ENCODE measurements at regions of chr6 and their contacts with region 1.

Region 1: DNA sequence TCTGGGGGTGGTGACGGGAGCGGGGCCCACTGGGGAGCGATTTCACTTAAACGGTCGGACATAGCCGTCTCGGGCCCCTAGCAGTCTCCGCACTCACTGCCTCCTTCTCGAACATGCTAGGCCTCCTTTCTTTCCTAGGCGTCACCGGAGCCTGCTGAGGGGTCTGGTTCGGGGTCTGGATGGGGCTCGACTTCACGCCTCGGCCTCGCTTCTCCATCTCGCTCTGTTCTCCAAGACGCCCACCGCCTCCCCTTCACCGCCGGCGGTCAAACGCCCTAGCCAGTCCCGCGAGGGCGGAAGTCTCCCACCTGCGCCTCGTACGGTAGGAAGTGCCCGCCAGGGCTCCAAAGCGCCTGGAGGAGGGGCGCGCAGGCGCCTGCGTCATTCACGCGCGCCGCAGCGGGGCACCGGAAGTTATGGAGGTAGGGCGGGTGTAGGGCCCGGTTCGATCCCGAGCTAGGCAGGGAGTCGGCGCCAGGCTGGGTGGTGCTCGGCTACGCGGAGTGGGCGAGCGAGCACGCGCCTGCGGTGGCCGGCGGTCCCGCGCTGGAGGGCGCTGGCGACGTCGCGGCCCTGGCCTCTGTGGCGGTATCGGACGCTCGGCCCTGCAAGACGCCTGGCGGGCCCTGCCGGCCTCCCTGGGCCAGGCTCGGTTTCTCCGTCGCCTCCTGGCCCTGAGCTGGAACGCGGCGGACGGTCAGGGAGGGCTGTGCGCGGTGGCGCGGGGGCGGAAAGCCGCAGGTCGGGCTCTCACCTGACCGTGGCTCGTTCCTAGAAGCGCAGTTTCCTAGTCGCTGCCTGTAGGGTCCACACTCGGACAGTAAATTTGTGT is at the starts of genes DYNLT2 and ERMARD:
- DNase-seq: peak; percentile 97
- H3K4me3 ChIP-seq: peak within 1 kb of the TSS; percentile 66
- H3K27ac ChIP-seq: peak within 1 kb of the TSS; percentile 97
- H3K4me1 ChIP-seq: peaks cover 17% of the 10 kb centered on the region
- H3K27me3 ChIP-seq: no peaks in the 10 kb centered on the region
- CTCF ChIP-seq: 0 out of 2 replicates have a peak, but pooled peaks have one; percentile 4
- total RNA-seq, gene DYNLT2: 2.4 TPM in 2 replicates
- total RNA-seq, gene ERMARD: 19.6 and 23.2 TPM in 2 replicates

Region 2: GRCh38 chr6:168683621-168684020 is 1067.8 kb before region 1 on chr6:
- CTCF ChIA-PET with region 1: no interaction called
- POLR2A ChIA-PET with region 1: no interaction called
- intact Hi-C with region 1: no loop called
- DNase-seq: no peak
- H3K4me3 ChIP-seq: no peak overlapping the region
- H3K27ac ChIP-seq: no peak overlapping the region
- H3K4me1 ChIP-seq: no peaks in the 10 kb centered on the region
- H3K27me3 ChIP-seq: peaks cover 5% of the 10 kb centered on the region
- CTCF ChIP-seq: no peak

Region 3: DNA sequence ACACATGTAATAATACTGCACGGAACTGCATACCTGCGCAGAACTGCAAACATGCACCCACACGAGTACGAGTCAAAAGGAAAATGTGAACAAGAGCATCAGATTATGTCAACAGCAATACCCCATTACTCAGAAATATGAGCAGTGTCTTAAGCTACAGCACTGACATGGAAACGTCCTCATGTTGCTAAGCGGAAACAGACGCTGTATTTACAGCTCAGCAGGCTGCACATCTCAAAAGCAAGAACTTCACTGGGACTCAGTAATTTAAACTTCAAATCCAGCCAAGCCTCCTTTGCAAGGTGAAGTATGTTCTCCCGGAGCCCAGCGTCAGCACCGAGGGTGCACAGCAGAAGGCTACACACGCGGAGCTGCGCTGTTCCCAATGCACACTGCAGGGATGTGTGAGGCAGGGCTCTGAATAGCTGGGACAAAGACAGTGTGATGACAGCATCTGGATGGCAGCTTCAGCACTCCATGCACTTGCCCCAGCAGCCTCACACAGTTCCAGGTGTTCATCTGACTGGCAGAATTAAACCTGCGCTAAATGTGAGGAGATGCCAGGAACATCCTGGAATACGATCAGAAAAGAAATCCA is 252.4 kb before region 1 on chr6:
- CTCF ChIA-PET with region 1: no interaction called
- POLR2A ChIA-PET with region 1: no interaction called
- intact Hi-C with region 1: no loop called
- DNase-seq: no peak
- H3K4me3 ChIP-seq: no peak overlapping the region
- H3K27ac ChIP-seq: no peak overlapping the region
- H3K4me1 ChIP-seq: no peaks in the 10 kb centered on the region
- H3K27me3 ChIP-seq: no peaks in the 10 kb centered on the region
- CTCF ChIP-seq: no peak

Region 4: DNA sequence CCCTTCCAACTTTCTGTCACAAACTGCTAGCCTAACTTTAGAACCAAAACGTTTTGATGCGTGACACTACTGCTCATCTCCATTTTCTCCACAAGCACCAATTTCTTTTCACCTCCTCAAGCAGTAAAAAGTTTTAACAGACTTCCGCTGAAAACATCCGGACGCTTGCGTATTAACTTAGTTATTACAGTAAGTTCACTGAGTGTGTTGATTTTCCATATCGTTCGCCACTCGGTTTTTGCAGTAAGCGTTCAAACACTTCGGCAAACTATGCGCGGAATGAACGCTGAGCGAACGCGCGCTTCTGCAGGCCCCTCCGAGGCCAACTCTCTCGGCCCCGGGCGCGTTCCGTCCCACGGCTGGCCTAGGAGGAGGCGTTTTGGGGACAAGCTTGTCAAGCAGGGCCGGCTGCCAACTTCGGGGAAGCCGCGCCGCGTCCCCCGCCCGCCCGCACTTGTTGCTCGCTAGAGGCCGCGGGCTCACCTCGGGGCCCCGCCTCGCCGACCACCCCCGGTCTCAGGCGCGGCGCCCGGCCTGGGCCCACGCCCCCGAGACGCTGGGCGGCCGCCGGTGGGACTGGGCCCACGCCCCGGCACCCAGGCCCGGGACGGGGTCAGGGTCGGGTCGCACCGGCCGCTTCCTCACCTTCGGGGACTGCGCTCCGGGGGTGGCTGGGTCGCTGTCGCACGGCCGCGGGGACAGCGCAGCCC is 28.1 kb before region 1 on chr6:
- CTCF ChIA-PET with region 1: no interaction called
- POLR2A ChIA-PET with region 1: no interaction called
- intact Hi-C with region 1: loop called (anchors 2 kb)
- DNase-seq: peak; percentile 84
- H3K4me3 ChIP-seq: peak overlapping the region; percentile 92
- H3K27ac ChIP-seq: peak overlapping the region; percentile 82
- H3K4me1 ChIP-seq: peaks cover 28% of the 10 kb centered on the region
- H3K27me3 ChIP-seq: no peaks in the 10 kb centered on the region
- CTCF ChIP-seq: no peak